Activated CD4-positive, alpha-beta T cell treated with anti-CD3 and anti-CD28 coated beads for 36 hours (primary cell): ENCODE measurements at regions of chr3 and their contacts with region 1.

Region 1: DNA sequence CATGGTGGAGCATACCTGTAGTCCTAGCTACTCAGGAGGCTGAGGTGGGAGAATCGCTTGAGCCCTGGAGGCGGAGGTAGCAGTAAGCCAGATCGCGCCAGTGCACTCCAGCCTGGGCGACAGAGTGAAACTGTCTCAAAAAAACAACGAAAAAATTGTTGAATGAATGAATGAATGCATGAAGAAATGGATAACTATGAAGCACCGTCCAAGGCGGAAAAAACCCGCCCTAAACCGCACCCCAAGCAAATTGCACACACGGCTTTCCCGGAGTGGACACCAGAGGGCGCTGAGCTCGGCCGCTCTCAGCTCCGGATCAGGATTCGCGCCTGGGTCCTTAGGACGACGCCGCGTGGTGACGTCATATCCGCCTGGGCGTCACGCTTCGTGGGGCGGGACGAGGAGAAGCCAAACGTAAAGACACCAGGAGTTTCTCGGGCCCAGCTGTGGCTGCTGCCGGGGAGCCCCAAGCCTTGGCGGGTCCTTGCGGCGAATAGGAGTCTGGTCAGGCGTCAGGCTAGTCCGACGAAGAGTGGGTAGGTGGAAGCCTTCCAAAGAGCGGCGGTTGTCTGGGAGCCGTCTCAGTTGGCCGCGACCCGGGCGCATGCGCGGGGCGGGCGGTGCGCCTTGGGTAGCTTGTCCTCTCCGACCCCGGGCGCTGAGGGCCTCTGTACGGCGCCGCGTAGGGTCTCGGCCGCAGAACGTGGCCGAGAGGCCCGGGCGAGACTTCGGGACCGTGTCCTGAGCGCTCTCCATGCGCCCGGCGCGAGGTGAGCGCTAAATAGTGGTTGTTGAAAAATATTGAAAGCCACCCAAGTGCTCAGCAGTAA is at the starts of genes HTD2 and RPP14:
- DNase-seq: peak; percentile 99
- ATAC-seq: peak; percentile 90
- H3K4me3 Mint-ChIP-seq: peak within 1 kb of the TSS; percentile 97
- H3K27ac Mint-ChIP-seq: peak within 1 kb of the TSS; percentile 97
- H3K4me1 Mint-ChIP-seq: peaks cover 30% of the 10 kb centered on the region
- H3K27me3 Mint-ChIP-seq: peaks cover 2% of the 10 kb centered on the region
- total RNA-seq, gene HTD2: 2.3 to 7.9 TPM
- total RNA-seq, gene RPP14: 16.4 to 16.9 TPM

Region 2: GRCh38 chr3:57597122-57597923 is 708.8 kb before region 1 on chr3 and contains the start of gene ARF4:
- CTCF ChIA-PET with region 1: no interaction called
- POLR2A ChIA-PET with region 1: no interaction called
- intact Hi-C with region 1: loop called in 1 of 2 experiments (anchors 2 kb)
- DNase-seq: peak; percentile 99
- ATAC-seq: peak; percentile 94
- H3K4me3 Mint-ChIP-seq: peak within 1 kb of the TSS; percentile 98
- H3K27ac Mint-ChIP-seq: peak within 1 kb of the TSS; percentile 99
- H3K4me1 Mint-ChIP-seq: peaks cover 30% of the 10 kb centered on the region
- H3K27me3 Mint-ChIP-seq: no peaks in the 10 kb centered on the region
- total RNA-seq, gene ARF4: 49.6 to 50.0 TPM

Region 3: DNA sequence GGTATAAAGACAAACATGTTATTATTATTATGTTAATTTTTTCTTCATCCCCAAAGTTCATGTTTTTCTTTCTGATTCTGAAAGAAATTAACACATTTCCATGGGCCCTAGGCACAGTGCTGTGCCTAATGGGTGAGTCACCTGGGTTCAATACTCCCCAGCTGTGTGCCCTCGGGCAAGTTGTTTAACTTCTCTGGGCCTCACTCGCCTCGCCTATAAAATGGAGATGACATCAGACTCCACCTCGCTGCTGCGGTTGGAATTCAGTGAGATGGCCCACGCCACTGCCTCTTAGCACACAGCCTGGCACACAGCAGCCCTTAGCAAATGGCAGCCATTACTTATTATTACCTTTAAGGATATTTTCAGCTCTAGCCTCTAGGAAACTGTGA is 117.9 kb before region 1 on chr3:
- CTCF ChIA-PET with region 1: interaction called, 40 read pairs
- POLR2A ChIA-PET with region 1: interaction called, 3 read pairs
- intact Hi-C with region 1: loop called in 1 of 2 experiments (anchors 1 kb)
- DNase-seq: no peak
- ATAC-seq: peak; percentile 63
- H3K4me3 Mint-ChIP-seq: no peak overlapping the region
- H3K27ac Mint-ChIP-seq: no peak overlapping the region
- H3K4me1 Mint-ChIP-seq: no peaks in the 10 kb centered on the region
- H3K27me3 Mint-ChIP-seq: no peaks in the 10 kb centered on the region

Region 4: GRCh38 chr3:58293516-58293915 is 12.6 kb before region 1 on chr3:
- CTCF ChIA-PET with region 1: interaction called, 14 read pairs
- POLR2A ChIA-PET with region 1: no interaction called
- intact Hi-C with region 1: no loop called
- DNase-seq: no peak
- ATAC-seq: no peak
- H3K4me3 Mint-ChIP-seq: no peak overlapping the region
- H3K27ac Mint-ChIP-seq: no peak overlapping the region
- H3K4me1 Mint-ChIP-seq: no peaks in the 10 kb centered on the region
- H3K27me3 Mint-ChIP-seq: peaks cover 3% of the 10 kb centered on the region

Region 5: DNA sequence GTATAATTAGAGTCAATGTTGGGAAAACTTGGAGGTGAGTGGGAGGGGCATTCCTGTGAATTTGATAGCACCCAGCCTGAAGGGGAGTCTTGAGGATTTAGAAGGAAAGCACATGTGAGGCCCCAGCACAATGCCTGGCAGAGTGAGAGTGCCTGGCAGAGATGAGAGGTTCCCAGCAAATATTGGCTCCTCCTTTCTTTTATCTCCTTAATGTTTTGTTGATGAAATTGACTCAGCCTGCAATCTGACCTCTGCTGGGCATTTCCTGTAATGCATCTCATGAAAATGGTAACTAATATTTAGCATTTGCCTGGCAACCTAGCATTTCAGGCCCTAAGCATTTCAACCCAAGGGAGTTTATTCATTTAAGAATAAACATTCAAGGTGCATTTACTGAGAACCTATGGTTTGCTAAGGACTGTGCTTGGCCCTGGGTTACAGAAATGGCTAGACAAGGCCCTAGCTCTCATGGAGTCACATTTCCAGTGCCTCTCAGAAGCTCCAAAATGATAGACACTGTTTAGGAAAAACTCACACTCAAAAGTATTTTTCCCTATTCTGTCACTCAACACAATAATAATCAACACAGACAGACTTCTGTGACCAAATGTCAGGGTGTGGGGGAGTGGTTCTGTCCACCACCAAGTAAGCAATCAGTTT is 108.6 kb after region 1 on chr3:
- CTCF ChIA-PET with region 1: interaction called, 44 read pairs
- POLR2A ChIA-PET with region 1: interaction called, 4 read pairs
- intact Hi-C with region 1: loop called (anchors 1 to 2 kb)
- DNase-seq: peak; percentile 56
- ATAC-seq: peak; percentile 85
- H3K4me3 Mint-ChIP-seq: no peak overlapping the region
- H3K27ac Mint-ChIP-seq: no peak overlapping the region
- H3K4me1 Mint-ChIP-seq: peaks cover 4% of the 10 kb centered on the region
- H3K27me3 Mint-ChIP-seq: no peaks in the 10 kb centered on the region

Region 6: DNA sequence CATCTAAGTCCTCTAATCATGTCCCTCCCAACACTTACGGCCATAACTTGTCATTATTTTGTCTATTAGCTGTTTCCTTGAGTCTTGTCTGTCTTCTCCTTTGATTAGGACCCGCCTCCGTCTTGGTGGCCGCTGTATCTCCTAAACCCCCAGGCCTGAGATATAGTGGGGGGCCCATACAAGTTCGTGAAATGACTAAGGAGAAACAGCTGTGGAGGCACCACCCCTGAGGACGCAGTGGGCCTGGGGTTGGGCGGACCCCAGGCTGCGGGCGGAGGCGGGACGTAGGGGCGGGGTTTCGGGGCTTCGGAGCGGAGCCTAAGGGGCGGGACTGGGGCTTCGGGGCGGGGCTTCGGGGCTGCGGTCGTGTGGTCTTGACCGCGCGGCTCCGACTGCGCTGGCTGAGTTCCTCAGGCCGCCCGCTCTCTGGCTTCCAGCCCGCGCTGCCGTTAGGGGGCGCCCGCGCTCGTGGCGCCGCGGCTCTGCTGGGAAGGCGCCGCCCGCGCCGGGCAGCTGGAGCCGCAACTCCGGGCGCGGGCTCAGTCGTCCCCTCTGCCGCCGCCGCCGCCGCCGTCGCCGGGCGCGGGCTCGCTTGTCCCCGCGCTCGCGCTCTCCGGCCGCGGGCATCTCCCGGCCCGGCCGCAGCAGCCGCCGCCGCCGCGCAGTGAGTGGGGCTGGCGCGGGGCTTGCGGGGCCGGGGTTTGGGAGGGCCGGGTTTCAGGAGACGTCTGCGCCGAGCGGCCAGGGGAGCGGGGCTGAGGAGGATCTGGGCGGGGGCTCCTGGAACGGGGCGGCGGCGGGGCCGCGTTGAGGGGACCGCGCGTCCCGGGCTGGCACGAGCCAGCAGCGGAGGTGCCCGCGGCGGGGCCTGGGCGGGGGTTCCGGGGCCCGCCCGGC is 185.7 kb after region 1 on chr3 and contains the start of gene KCTD6:
- CTCF ChIA-PET with region 1: interaction called, 19 read pairs
- POLR2A ChIA-PET with region 1: interaction called, 5 read pairs
- intact Hi-C with region 1: loop called (anchors 1 kb)
- DNase-seq: peak; percentile 91
- ATAC-seq: peak; percentile 90
- H3K4me3 Mint-ChIP-seq: peak within 1 kb of the TSS; percentile 84
- H3K27ac Mint-ChIP-seq: peak within 1 kb of the TSS; percentile 90
- H3K4me1 Mint-ChIP-seq: peaks cover 45% of the 10 kb centered on the region
- H3K27me3 Mint-ChIP-seq: peaks cover 6% of the 10 kb centered on the region
- total RNA-seq, gene KCTD6: 7.1 to 7.9 TPM